ENCODE measurements at regions of chr15 and their contacts with region 1.

Region 1: GRCh38 chr15:63860155-63860554 is 26.4 kb upstream of the HERC1 start:
- DNase-seq: peak; percentile 32 to 86 (median 67)
- ATAC-seq: peak; percentile 96 to 97
- H3K4me3 Mint-ChIP-seq: peak overlapping the region; percentile 25 to 88 (median 73)
- H3K27ac Mint-ChIP-seq: peak overlapping the region; percentile 85 to 98 (median 97)
- H3K4me1 Mint-ChIP-seq: peaks cover 43 to 68% (median 63%) of the 10 kb centered on the region in 4 donors
- H3K27me3 Mint-ChIP-seq: no peaks in the 10 kb centered on the region

Region 2: DNA sequence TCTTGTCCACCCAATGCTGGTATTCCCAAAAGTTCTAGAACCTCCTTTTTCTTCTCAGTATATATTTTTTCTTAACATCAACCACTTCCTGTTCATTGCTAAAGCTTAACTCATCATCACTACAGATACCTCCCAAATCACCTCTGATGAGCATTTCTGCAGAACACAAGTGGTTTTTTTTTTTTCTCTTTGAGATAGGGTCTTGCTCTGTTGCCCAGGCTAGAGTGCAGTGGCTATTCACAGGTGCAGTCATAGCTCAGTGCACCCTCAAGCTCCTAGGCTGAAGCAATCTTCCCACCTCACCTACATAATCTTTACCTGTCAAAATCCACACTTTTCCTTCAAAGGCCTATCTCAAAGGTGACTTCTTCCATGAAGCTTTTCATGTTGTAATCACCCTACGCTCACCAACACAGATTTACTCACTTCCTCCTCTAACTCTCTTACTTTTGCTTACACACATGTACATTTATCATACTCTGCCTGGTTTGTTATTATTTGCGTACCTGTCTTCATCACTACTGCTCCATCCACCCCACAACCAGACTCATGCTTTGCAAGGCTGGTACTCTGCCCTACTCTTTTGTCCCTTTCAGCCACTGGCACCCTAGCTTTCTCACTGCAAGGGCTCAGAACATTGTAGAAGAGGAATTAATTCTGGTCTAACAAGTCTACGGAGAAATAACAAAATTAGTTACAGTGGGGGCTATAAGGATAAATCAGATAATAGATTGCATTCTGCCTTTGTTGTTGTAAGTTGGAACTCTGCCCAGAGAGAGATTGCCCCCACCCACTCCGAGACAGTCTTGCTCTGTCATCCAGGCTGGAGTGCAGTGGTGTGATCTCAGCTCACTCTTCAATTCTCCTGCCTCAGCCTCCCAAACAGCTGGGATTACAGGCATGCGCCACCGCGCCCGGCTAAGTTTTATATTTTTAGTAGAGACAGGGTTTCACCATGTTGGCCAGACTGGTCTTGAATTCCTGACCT is 53.9 kb before region 1 on chr15:
- POLR2A ChIA-PET with region 1: interaction called, 11 read pairs
- DNase-seq: no peak
- ATAC-seq: peak; percentile 39 to 61
- H3K4me3 Mint-ChIP-seq: peak overlapping the region; percentile 1 to 76 (median 52)
- H3K27ac Mint-ChIP-seq: peak overlapping the region; percentile 8 to 88 (median 62)
- H3K4me1 Mint-ChIP-seq: peaks cover 44 to 92% (median 88%) of the 10 kb centered on the region in 4 donors
- H3K27me3 Mint-ChIP-seq: no peaks in the 10 kb centered on the region

Region 3: DNA sequence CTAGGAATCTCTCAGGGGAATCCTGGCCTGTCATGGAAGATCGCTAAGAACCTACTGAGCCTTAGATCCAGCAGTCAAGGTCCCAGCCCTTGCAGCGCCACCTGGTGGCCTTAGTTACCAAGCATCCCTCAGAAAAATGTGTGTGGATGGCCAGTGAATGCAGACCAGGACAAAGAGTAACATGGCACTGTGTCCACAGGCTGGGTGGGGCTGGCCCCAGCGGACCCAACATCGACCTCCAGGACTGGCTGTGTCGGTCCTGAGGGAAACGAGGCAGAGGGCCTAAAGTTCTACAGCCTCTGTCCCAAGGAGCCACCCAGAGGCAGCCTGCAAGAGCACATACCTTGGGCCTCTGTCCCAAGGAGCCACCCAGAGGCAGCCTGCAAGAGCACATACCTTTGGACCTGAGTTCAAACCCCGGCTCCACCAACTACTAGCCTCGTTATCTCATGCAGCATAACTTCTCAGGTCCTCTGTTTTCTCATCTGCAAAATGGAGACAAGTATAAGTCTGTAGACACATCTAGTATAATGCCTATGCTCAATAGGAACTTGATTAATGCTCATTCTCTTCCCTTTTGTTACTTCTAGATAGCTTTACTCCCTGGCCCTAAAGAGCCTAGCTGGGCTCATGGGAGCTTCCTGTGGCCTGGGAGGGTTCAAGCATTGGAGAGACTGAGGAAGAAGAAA is 31.1 kb after region 1 on chr15:
- POLR2A ChIA-PET with region 1: interaction called, 17 read pairs
- DNase-seq: peak; percentile 37 to 78 (median 64)
- ATAC-seq: no peak
- H3K4me3 Mint-ChIP-seq: peak overlapping the region in 6 of 10 donors; percentile 15 to 73 (median 53)
- H3K27ac Mint-ChIP-seq: peak overlapping the region; percentile 83 to 97 (median 95)
- H3K4me1 Mint-ChIP-seq: peaks cover 40 to 80% (median 74%) of the 10 kb centered on the region in 4 donors
- H3K27me3 Mint-ChIP-seq: no peaks in the 10 kb centered on the region

Measured in naive thymus-derived CD8-positive, alpha-beta T cell (primary cell).